GM10248 (cell line): ENCODE measurements at regions of chr10 and their contacts with region 1.

Region 1: GRCh38 chr10:28587970-28588290 is 55.0 kb downstream of the WAC start:
- DNase-seq: no peak
- CTCF ChIP-seq: no peak

Region 2: GRCh38 chr10:28620251-28620650 is 32.3 kb after region 1 on chr10:
- CTCF ChIA-PET with region 1: interaction called, 14 read pairs
- POLR2A ChIA-PET with region 1: no interaction called
- DNase-seq: no peak
- CTCF ChIP-seq: no peak